GM12878 (cell line): ENCODE measurements at regions of chr2 and their contacts with region 1.

Region 1: DNA sequence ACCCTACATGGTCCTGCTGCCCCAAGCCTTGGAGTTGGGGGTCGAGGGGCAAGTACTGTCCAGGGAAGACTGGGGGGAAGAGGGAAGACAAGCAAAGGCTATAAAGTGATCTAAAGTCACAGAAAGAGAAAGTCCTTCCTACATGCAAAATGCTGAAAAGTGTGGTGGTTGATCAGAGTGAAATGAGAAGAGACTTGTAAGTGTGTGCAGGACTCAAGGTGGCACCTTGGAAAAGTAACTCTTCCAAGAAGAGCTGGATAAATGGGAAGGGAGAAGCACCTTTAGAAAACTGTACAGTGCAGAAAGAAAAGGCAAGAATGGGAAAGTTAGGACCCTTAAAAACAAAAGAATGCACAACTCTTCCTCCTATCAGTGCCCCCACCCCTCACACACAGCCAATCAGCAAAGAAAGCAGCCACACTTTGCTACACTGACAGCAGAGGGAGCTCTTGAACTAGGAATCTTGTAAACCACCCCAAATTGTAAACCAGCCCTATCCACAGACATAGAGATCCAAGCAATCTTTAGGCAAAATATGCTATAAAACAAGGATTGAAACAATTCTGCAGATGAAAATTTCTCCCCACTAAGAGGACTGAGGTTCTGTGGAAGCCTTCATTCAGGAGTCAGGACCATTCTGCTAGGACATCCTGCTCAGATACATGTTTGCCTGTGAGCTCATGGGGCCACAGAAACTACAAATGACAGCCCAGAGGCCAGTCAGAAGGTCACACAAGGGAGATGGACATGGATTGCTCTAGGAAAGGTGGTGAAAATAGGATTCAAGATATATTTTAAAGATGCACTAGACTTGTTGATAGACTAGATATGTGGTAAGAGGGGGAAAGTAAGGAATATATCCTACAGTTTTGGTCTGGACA is 146.4 kb downstream of the FTCDNL1 start:
- DNase-seq: no peak
- ATAC-seq: peak; percentile 81
- H3K4me3 ChIP-seq: no peak overlapping the region
- H3K27ac ChIP-seq: no peak overlapping the region
- H3K4me1 ChIP-seq: no peaks in the 10 kb centered on the region
- H3K27me3 ChIP-seq: no peaks in the 10 kb centered on the region
- CTCF ChIP-seq: peak; percentile 42 to 61 (median 49); a peak in 5 of 6 replicates
- EP300 ChIP-seq: no peak
- POLR2A ChIP-seq: no peak
- RAD21 ChIP-seq: peak; percentile 62

Region 2: GRCh38 chr2:199543606-199544172 is 160.9 kb before region 1 on chr2:
- CTCF ChIA-PET with region 1: no interaction called
- POLR2A ChIA-PET with region 1: no interaction called
- RAD21 ChIA-PET with region 1: no interaction called
- SMC1A ChIA-PET with region 1: no interaction called
- in situ Hi-C with region 1: no loop called
- intact Hi-C with region 1: no loop called
- DNase-seq: no peak
- ATAC-seq: no peak
- H3K4me3 ChIP-seq: no peak overlapping the region
- H3K27ac ChIP-seq: no peak overlapping the region
- H3K4me1 ChIP-seq: no peaks in the 10 kb centered on the region
- H3K27me3 ChIP-seq: no peaks in the 10 kb centered on the region
- CTCF ChIP-seq: no peak
- EP300 ChIP-seq: no peak
- POLR2A ChIP-seq: no peak
- RAD21 ChIP-seq: no peak

Region 3: GRCh38 chr2:199663157-199663556 is 41.4 kb before region 1 on chr2:
- CTCF ChIA-PET with region 1: no interaction called
- POLR2A ChIA-PET with region 1: no interaction called
- RAD21 ChIA-PET with region 1: no interaction called
- SMC1A ChIA-PET with region 1: no interaction called
- in situ Hi-C with region 1: no loop called
- intact Hi-C with region 1: no loop called
- DNase-seq: peak; percentile 2
- ATAC-seq: peak; percentile 63
- H3K4me3 ChIP-seq: no peak overlapping the region
- H3K27ac ChIP-seq: no peak overlapping the region
- H3K4me1 ChIP-seq: no peaks in the 10 kb centered on the region
- H3K27me3 ChIP-seq: no peaks in the 10 kb centered on the region; a peak in 1 of 4 replicates
- CTCF ChIP-seq: no peak
- EP300 ChIP-seq: no peak
- POLR2A ChIP-seq: no peak
- RAD21 ChIP-seq: no peak

Region 4: DNA sequence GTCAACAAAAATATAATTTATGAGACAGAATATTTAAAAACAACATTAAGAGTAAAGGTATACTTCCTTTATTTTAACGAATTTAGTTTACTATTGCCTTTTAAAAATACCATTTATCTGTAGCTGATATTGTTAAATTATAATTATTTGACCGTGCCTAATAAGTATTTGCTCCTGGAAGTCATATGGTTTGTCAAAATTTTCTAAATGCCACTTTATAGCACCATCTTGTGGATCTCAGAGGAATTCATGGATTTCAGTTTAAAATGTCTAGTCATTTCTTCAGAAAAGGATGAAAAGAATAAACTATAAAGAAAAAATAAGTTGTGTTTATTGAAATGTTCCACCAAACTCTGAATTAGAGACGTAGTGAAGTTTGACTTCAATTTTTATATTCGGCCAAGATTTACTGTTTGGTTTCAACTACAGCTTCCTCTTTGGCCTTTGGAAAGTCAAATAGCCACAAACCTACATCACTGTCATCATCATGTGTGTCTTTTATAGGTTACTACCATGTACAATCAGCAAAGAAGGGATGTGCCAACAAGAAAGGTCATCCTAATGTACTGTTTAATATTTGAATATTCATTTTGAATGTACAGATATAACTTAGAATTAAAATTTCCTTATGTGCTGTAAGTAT is 156.7 kb after region 1 on chr2:
- CTCF ChIA-PET with region 1: interaction called, 8 read pairs
- POLR2A ChIA-PET with region 1: no interaction called
- RAD21 ChIA-PET with region 1: no interaction called
- SMC1A ChIA-PET with region 1: interaction called, 3 read pairs
- in situ Hi-C with region 1: no loop called
- intact Hi-C with region 1: loop called (anchors 1 kb)
- DNase-seq: no peak
- ATAC-seq: no peak
- H3K4me3 ChIP-seq: no peak overlapping the region
- H3K27ac ChIP-seq: no peak overlapping the region
- H3K4me1 ChIP-seq: no peaks in the 10 kb centered on the region
- H3K27me3 ChIP-seq: no peaks in the 10 kb centered on the region
- CTCF ChIP-seq: peak; percentile 38 to 49 (median 47); a peak in 5 of 6 replicates
- EP300 ChIP-seq: no peak
- POLR2A ChIP-seq: no peak
- RAD21 ChIP-seq: peak; percentile 63

Region 5: GRCh38 chr2:199940373-199940772 is 235.8 kb after region 1 on chr2:
- CTCF ChIA-PET with region 1: interaction called, 11 read pairs
- POLR2A ChIA-PET with region 1: no interaction called
- RAD21 ChIA-PET with region 1: no interaction called
- SMC1A ChIA-PET with region 1: no interaction called
- in situ Hi-C with region 1: no loop called
- intact Hi-C with region 1: loop called (anchors 10 kb)
- DNase-seq: no peak
- ATAC-seq: peak; percentile 83
- H3K4me3 ChIP-seq: no peak overlapping the region
- H3K27ac ChIP-seq: no peak overlapping the region
- H3K4me1 ChIP-seq: no peaks in the 10 kb centered on the region
- H3K27me3 ChIP-seq: no peaks in the 10 kb centered on the region
- CTCF ChIP-seq: peak; percentile 4 to 41 (median 24); a peak in 1 of 6 replicates
- EP300 ChIP-seq: no peak
- POLR2A ChIP-seq: no peak
- RAD21 ChIP-seq: peak; percentile 56